ENCODE measurements at regions of chr3 and their contacts with region 1.

Region 1: GRCh38 chr3:3179407-3180094 is at the start of gene CRBN:
- DNase-seq: peak; percentile 82 to 91 (median 89)
- ATAC-seq: peak; percentile 100
- H3K4me3 ChIP-seq: peak within 1 kb of the TSS; percentile 86
- H3K4me3 Mint-ChIP-seq: peak within 1 kb of the TSS; percentile 88 to 99 (median 94)
- H3K27ac ChIP-seq: peak within 1 kb of the TSS; percentile 87
- H3K27ac Mint-ChIP-seq: peak within 1 kb of the TSS; percentile 89 to 98 (median 95)
- H3K4me1 ChIP-seq: peaks cover 24 to 36% of the 10 kb centered on the region in 2 donors
- H3K4me1 Mint-ChIP-seq: peaks cover 28 to 56% (median 46%) of the 10 kb centered on the region in 7 donors
- H3K27me3 ChIP-seq: no peaks in the 10 kb centered on the region
- H3K27me3 Mint-ChIP-seq: peaks cover 0 to 15% (median 0%) of the 10 kb centered on the region in 5 donors
- total RNA-seq, gene CRBN: 69.1 to 169 (median 134) TPM

Region 2: GRCh38 chr3:2765002-2765579 is 414.5 kb before region 1 on chr3:
- CTCF ChIA-PET with region 1: no interaction called
- POLR2A ChIA-PET with region 1: no interaction called
- intact Hi-C with region 1: loop called (anchors 2 kb)
- DNase-seq: peak in 5 of 9 donors; percentile 2 to 32 (median 17)
- ATAC-seq: peak; percentile 73
- H3K4me3 ChIP-seq: no peak overlapping the region
- H3K4me3 Mint-ChIP-seq: peak overlapping the region in 4 of 10 donors; percentile 47 to 63 (median 51)
- H3K27ac ChIP-seq: no peak overlapping the region
- H3K27ac Mint-ChIP-seq: no peak overlapping the region
- H3K4me1 ChIP-seq: no peaks in the 10 kb centered on the region
- H3K4me1 Mint-ChIP-seq: peaks cover 0 to 4% (median 0%) of the 10 kb centered on the region in 7 donors
- H3K27me3 ChIP-seq: peaks cover 0 to 3% of the 10 kb centered on the region in 2 donors
- H3K27me3 Mint-ChIP-seq: peaks cover 0 to 12% (median 7%) of the 10 kb centered on the region in 5 donors

Region 3: DNA sequence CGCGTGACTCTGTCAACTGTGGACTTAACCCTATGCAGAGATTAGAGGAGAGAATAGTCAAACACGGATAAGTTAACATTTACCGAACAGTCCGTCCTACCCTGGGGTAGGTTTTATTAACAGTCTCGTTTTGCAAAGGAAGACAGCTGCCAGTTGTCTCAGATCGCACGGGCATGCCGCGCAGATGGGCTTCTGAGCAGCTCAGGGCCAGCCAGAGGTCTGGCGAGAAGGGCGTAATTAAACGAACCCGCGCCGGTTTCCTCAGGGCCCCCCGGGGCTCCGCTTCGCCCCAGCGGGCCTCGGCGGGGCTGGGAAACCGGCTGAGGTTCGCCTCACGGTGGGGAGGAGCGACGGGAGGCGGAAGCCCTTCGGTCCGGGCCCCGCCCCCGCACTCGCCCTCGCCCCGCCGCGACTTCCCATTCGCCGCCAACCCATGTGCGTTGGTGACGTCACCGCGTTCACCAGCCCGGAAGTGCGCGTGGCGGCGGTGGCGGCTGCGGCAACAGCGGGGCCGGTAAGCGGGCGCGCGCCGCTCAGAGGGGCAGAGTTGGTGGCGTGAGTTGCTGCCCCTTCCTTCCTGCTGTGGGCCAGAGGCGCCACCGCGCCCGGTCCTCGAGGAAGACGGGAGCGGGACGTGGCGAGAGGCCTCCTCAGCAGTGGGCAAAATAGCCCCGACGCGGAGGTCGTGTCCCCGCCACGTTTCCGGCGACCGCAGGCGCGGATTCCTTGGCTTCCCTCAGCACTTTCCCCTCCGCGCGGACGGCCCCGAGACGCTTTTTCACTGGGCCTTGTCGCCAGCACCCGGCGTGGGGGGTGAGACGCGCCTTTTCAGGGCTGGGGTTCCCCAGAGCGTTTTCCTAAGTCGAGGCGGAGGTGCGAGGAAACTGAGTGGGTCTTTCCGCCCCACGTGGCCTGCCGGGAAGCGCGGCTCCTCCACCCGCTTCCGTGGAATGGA is 52.8 kb before region 1 on chr3 and contains the start of gene TRNT1:
- CTCF ChIA-PET with region 1: no interaction called
- POLR2A ChIA-PET with region 1: no interaction called
- intact Hi-C with region 1: loop called (anchors 1 kb)
- DNase-seq: peak; percentile 92 to 97 (median 96)
- ATAC-seq: peak; percentile 97
- H3K4me3 ChIP-seq: peak within 1 kb of the TSS; percentile 92
- H3K4me3 Mint-ChIP-seq: peak within 1 kb of the TSS; percentile 94 to 100 (median 96)
- H3K27ac ChIP-seq: peak within 1 kb of the TSS; percentile 96
- H3K27ac Mint-ChIP-seq: peak within 1 kb of the TSS; percentile 96 to 99 (median 97)
- H3K4me1 ChIP-seq: peaks cover 10 to 25% of the 10 kb centered on the region in 2 donors
- H3K4me1 Mint-ChIP-seq: peaks cover 12 to 48% (median 42%) of the 10 kb centered on the region in 7 donors
- H3K27me3 ChIP-seq: no peaks in the 10 kb centered on the region
- H3K27me3 Mint-ChIP-seq: no peaks in the 10 kb centered on the region
- total RNA-seq, gene TRNT1: 36.4 to 44.5 (median 38.8) TPM

Region 4: GRCh38 chr3:3296979-3297381 is 117.4 kb after region 1 on chr3:
- CTCF ChIA-PET with region 1: no interaction called
- POLR2A ChIA-PET with region 1: no interaction called
- intact Hi-C with region 1: loop called in 1 of 2 experiments (anchors 10 kb)
- DNase-seq: peak in 7 of 9 donors; percentile 12 to 60 (median 48)
- ATAC-seq: peak; percentile 76
- H3K4me3 ChIP-seq: no peak overlapping the region
- H3K4me3 Mint-ChIP-seq: peak overlapping the region; percentile 48 to 85 (median 74)
- H3K27ac ChIP-seq: peak overlapping the region; percentile 45
- H3K27ac Mint-ChIP-seq: peak overlapping the region in 8 of 9 donors; percentile 66 to 93 (median 83)
- H3K4me1 ChIP-seq: peaks cover 0 to 12% of the 10 kb centered on the region in 2 donors
- H3K4me1 Mint-ChIP-seq: peaks cover 7 to 44% (median 30%) of the 10 kb centered on the region in 7 donors
- H3K27me3 ChIP-seq: no peaks in the 10 kb centered on the region
- H3K27me3 Mint-ChIP-seq: peaks cover 0 to 3% (median 0%) of the 10 kb centered on the region in 5 donors

Region 5: GRCh38 chr3:4303187-4304123 is 1123.9 kb after region 1 on chr3 and contains the start of gene SETMAR:
- CTCF ChIA-PET with region 1: no interaction called
- POLR2A ChIA-PET with region 1: interaction called, 4 read pairs
- intact Hi-C with region 1: loop called (anchors 1 kb)
- DNase-seq: peak; percentile 73 to 86 (median 82)
- ATAC-seq: peak; percentile 97
- H3K4me3 ChIP-seq: peak within 1 kb of the TSS; percentile 92
- H3K4me3 Mint-ChIP-seq: peak within 1 kb of the TSS; percentile 88 to 99 (median 97)
- H3K27ac ChIP-seq: peak within 1 kb of the TSS; percentile 91
- H3K27ac Mint-ChIP-seq: peak within 1 kb of the TSS; percentile 92 to 99 (median 98)
- H3K4me1 ChIP-seq: peaks cover 0 to 8% of the 10 kb centered on the region in 2 donors
- H3K4me1 Mint-ChIP-seq: peaks cover 8 to 45% (median 34%) of the 10 kb centered on the region in 7 donors
- H3K27me3 ChIP-seq: no peaks in the 10 kb centered on the region
- H3K27me3 Mint-ChIP-seq: no peaks in the 10 kb centered on the region
- total RNA-seq, gene SETMAR: 6.4 to 13.7 (median 12.5) TPM